H1 (cell line): ENCODE measurements at regions of chr5 and their contacts with region 1.

Region 1: GRCh38 chr5:160439205-160439600 is 17.5 kb downstream of the PTTG1 start:
- DNase-seq: peak; percentile 83 to 99
- H3K4me3 ChIP-seq: peak overlapping the region in 3 of 4 experiments; percentile 8 to 54 (median 36); a peak in 5 of 8 replicates
- H3K27ac ChIP-seq: no peak overlapping the region
- H3K4me1 ChIP-seq: no peaks in the 10 kb centered on the region
- H3K27me3 ChIP-seq: no peaks in the 10 kb centered on the region
- CTCF ChIP-seq: peak; percentile 82 to 91 (median 88)
- EP300 ChIP-seq: no peak
- POLR2A ChIP-seq: no peak
- RAD21 ChIP-seq: peak; percentile 71 to 78

Region 2: DNA sequence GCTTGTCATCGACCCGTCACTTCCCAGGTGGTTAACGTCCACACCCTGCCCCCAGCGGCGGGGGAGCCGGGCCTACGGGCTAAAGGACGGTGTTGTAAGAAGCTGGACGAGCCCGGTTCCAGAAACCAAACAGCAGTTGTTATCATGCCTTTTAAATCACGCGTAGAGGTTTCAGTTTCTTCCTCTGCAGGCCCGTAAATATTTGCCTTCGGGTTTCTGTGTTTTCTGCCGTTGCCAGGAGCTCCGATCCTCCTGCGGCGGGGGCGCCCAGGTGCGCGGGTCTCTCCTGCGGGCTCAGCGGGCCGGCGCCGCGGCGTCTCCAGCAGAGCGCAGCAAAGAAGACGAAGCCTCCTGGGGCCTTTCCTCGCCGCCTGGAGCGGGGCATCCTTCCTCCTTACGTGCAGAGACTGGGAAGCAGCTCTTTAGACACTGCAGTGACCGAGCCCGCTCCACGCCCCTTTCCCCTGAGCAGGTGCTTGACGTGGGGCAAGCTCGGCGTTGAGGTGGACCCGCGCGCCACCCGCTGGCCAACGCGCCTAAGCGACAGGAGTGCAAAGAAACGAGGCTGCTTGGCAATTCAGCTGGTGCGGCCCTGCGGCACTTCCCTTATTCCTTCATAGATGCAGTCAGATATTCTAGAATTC is 452.1 kb before region 1 on chr5:
- CTCF ChIA-PET with region 1: no interaction called
- POLR2A ChIA-PET with region 1: no interaction called
- DNase-seq: peak; percentile 65 to 89
- H3K4me3 ChIP-seq: peak overlapping the region; percentile 9 to 62 (median 52)
- H3K27ac ChIP-seq: no peak overlapping the region
- H3K4me1 ChIP-seq: peaks cover 0 to 2% (median 0%) of the 10 kb centered on the region in 4 experiments; a peak in 1 of 7 replicates
- H3K27me3 ChIP-seq: peaks cover 4 to 15% (median 12%) of the 10 kb centered on the region in 4 experiments; a peak in 6 of 7 replicates
- CTCF ChIP-seq: peak; percentile 78 to 84 (median 79)
- EP300 ChIP-seq: peak in 1 of 2 experiments; percentile 71; a peak in 1 of 3 replicates
- POLR2A ChIP-seq: no peak
- RAD21 ChIP-seq: peak; percentile 87 to 91

Region 3: DNA sequence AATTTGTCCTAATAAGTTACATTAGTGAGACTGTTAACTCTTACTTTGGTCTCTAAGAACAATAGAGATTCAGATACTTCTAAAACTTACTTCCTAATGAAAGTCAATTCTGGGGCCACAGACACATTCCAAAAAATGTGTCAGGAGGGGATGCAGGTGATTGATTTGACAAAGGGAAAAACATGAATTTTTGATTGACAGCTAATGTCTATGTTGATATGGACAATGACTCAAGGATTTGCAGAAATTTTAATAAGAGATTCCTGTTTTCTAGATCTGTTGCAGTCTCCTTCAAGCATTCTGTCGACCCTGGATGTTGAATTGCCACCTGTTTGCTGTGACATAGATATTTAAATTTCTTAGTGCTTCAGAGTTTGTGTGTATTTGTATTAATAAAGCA is 10.9 kb before region 1 on chr5:
- CTCF ChIA-PET with region 1: interaction called, 16 read pairs
- POLR2A ChIA-PET with region 1: interaction called, 4 read pairs
- DNase-seq: no peak
- H3K4me3 ChIP-seq: no peak overlapping the region
- H3K27ac ChIP-seq: no peak overlapping the region
- H3K4me1 ChIP-seq: 0 out of 7 replicates have a peak, but pooled peaks cover 0 to under 1% (median 0%) of the 10 kb centered on the region in 4 experiments
- H3K27me3 ChIP-seq: no peaks in the 10 kb centered on the region
- CTCF ChIP-seq: no peak
- EP300 ChIP-seq: no peak
- POLR2A ChIP-seq: no peak
- RAD21 ChIP-seq: no peak

Region 4: DNA sequence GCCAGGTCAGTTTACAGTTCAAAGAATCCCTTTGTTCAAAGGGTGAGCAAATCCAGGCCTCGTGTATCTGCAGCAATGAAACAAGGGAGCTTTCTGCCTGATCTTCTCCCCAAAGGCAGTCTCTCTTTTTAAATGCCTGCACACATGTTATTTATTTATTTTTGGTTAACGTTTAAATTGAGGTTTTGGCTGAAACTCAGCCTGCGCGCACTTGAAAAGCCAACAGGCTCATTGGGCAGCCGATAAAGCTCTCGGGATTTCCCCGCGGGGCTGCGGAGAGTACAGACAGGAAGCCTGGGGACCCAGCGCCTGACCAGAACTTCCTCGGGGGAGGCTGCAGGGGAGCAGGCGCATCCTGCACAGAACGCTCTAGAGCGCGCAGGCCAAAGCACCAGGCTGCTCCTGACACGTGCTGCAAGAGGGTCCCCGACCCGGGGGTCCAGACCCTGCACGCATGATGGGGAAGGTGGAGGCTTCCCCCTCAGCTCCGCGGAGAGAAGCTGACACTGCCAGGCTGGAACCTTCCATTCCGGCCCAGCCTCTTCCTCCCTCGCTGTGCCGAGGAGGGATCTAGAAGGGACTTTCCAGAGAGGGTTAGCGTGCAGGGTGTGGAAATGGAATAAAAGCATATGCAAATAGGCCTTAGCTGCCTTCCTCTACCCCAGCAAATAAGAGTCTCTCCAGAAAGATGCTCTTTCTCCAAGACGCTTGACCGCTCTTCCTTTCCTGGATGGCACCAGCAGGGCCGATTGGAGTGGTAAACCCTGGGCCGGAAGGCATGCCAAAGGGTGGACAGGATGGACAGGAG is 28.6 kb after region 1 on chr5:
- CTCF ChIA-PET with region 1: interaction called, 19 read pairs
- POLR2A ChIA-PET with region 1: no interaction called
- DNase-seq: peak in 1 of 2 experiments; percentile 63
- H3K4me3 ChIP-seq: no peak overlapping the region
- H3K27ac ChIP-seq: no peak overlapping the region
- H3K4me1 ChIP-seq: peaks cover 0 to 6% (median 2%) of the 10 kb centered on the region in 4 experiments; a peak in 4 of 7 replicates
- H3K27me3 ChIP-seq: no peaks in the 10 kb centered on the region
- CTCF ChIP-seq: no peak
- EP300 ChIP-seq: no peak
- POLR2A ChIP-seq: no peak
- RAD21 ChIP-seq: no peak

Region 5: GRCh38 chr5:160500786-160501779 is 61.9 kb after region 1 on chr5:
- CTCF ChIA-PET with region 1: interaction called, 81 read pairs
- POLR2A ChIA-PET with region 1: no interaction called
- DNase-seq: no peak
- H3K4me3 ChIP-seq: no peak overlapping the region
- H3K27ac ChIP-seq: no peak overlapping the region
- H3K4me1 ChIP-seq: 0 out of 7 replicates have a peak, but pooled peaks cover 0 to under 1% (median 0%) of the 10 kb centered on the region in 4 experiments
- H3K27me3 ChIP-seq: no peaks in the 10 kb centered on the region
- CTCF ChIP-seq: no peak
- EP300 ChIP-seq: no peak
- POLR2A ChIP-seq: no peak
- RAD21 ChIP-seq: no peak

Region 6: DNA sequence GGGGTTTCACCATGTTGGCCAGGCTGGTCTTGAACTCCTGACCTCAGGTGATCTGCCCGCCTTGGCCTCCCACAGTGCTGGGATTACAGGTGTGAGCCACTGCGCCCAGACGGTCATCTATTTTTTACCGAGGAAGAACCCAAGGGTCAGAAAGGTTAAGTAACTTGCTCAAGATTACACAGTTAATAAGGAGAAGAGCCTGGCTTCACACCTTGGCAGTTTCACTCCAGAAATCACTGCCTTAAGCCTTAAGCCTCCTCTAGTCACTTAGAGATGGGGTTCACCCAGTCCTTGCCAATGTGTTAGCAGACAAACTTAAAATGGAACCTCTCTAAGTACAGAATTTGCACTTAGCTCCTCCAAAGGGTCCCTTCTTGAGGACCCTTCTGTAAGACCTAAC is 98.7 kb after region 1 on chr5:
- CTCF ChIA-PET with region 1: interaction called, 11 read pairs
- POLR2A ChIA-PET with region 1: no interaction called
- DNase-seq: no peak
- H3K4me3 ChIP-seq: no peak overlapping the region
- H3K27ac ChIP-seq: no peak overlapping the region
- H3K4me1 ChIP-seq: peaks cover 0 to 3% (median 2%) of the 10 kb centered on the region in 4 experiments; a peak in 2 of 7 replicates
- H3K27me3 ChIP-seq: no peaks in the 10 kb centered on the region
- CTCF ChIP-seq: no peak
- EP300 ChIP-seq: no peak
- POLR2A ChIP-seq: no peak
- RAD21 ChIP-seq: no peak

Region 7: DNA sequence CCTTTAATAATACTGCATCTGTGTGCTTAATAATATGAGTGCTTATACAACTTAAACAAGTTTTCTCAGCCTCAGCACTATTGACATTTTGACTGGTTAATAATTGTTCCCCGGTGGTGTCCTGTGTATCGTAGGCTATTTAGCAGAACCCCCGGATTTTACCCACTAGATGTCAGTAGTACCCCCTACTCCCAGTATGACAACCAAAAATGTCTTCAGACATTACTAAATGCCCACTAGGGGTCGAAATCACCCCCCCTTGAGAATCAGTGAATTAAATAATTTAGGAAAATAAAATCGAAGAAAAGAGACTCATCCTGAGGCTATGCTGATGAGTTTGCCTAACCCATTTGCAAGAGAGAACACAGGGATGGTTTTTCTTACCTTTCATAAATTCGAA is 246.5 kb after region 1 on chr5:
- CTCF ChIA-PET with region 1: interaction called, 10 read pairs
- POLR2A ChIA-PET with region 1: no interaction called
- DNase-seq: no peak
- H3K4me3 ChIP-seq: no peak overlapping the region
- H3K27ac ChIP-seq: no peak overlapping the region
- H3K4me1 ChIP-seq: no peaks in the 10 kb centered on the region
- H3K27me3 ChIP-seq: no peaks in the 10 kb centered on the region
- CTCF ChIP-seq: peak in 2 of 3 experiments; percentile 67 to 97; a peak in 3 of 4 replicates
- EP300 ChIP-seq: no peak
- POLR2A ChIP-seq: no peak
- RAD21 ChIP-seq: peak; percentile 85 to 86